WTC11 (cell line): ENCODE measurements at regions of chr17 and their contacts with region 1.

Region 1: DNA sequence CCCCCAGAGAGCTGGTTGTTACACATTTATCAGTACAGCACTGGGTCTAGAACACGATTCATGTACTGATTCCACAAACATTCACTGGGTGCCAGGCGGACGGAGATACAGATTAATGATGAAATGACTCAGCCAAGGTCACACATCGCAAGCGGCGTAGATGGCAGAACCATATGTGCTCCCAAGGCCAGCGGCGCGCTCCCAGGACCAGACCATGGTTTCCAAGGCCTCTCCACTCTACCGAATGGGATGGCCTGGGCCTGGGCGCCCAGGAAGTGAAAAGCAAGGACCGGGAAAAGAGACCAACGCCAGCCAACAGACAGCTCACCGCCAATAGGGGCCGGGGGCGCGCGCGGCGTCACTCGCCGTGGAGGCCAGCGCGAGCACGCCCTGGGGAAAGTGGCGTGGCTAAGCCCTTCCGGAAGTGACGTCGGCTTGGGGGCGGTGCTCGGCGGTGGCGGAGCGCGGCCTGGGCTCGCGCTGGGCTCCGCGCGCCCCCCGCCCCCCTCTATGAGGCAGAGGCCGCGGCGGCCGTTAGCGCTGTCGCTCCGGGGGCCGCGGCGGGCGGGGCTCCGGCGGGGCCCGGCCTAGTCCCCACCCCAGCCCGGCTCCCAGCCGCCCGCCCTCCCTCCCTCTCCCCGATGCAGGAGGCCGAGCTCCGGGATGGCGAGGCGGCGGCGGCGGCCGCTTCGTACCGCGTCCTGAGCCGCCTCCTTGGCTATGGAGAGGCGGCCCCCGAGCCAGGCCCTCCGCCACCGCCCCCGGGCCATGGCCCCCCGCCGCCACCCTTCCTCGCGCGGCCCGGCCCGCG is at the start of gene SOCS7:
- DNase-seq: peak; percentile 90
- ATAC-seq: peak; percentile 81
- H3K4me3 Mint-ChIP-seq: peak within 1 kb of the TSS; percentile 79
- H3K27ac Mint-ChIP-seq: peak within 1 kb of the TSS; percentile 98
- H3K4me1 Mint-ChIP-seq: peaks cover 48% of the 10 kb centered on the region
- H3K27me3 Mint-ChIP-seq: no peaks in the 10 kb centered on the region; the same call in 1 of the 2 replicates
- CTCF ChIP-seq: no peak
- total RNA-seq, gene SOCS7: 32.3 to 34.4 TPM (median 33.6 TPM) in 3 replicates

Region 2: GRCh38 chr17:38322091-38322779 is 29.4 kb before region 1 on chr17:
- CTCF ChIA-PET with region 1: interaction called, 221 read pairs
- POLR2A ChIA-PET with region 1: interaction called, 3 read pairs
- DNase-seq: peak; percentile 83
- ATAC-seq: peak; percentile 78
- H3K4me3 Mint-ChIP-seq: no peak overlapping the region
- H3K27ac Mint-ChIP-seq: no peak overlapping the region; the same call in 1 of the 2 replicates
- H3K4me1 Mint-ChIP-seq: peaks cover 22% of the 10 kb centered on the region
- H3K27me3 Mint-ChIP-seq: no peaks in the 10 kb centered on the region
- CTCF ChIP-seq: peak; percentile 90

Region 3: DNA sequence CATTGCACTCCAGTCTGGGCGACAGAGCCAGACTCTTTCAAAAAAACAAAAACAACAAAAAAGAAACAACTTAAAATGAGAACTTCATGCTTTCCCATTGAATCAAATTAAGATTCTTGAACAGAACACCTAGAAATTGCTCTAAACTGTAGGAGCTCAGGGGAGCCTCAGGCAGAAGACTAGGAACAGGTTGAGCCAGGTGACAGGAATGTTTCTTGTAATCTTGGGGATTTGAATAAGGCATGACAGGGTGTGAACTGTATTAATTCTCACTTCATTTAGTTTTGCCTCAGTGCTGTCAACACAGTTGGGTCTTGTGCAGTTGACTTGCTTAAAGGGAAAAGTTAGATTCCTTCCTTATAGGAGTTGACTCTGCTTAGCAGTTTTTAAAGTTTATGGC is 27.8 kb after region 1 on chr17:
- CTCF ChIA-PET with region 1: interaction called, 48 read pairs
- POLR2A ChIA-PET with region 1: no interaction called
- DNase-seq: no peak
- ATAC-seq: no peak
- H3K4me3 Mint-ChIP-seq: no peak overlapping the region
- H3K27ac Mint-ChIP-seq: no peak overlapping the region
- H3K4me1 Mint-ChIP-seq: no peaks in the 10 kb centered on the region
- H3K27me3 Mint-ChIP-seq: no peaks in the 10 kb centered on the region
- CTCF ChIP-seq: no peak

Region 4: DNA sequence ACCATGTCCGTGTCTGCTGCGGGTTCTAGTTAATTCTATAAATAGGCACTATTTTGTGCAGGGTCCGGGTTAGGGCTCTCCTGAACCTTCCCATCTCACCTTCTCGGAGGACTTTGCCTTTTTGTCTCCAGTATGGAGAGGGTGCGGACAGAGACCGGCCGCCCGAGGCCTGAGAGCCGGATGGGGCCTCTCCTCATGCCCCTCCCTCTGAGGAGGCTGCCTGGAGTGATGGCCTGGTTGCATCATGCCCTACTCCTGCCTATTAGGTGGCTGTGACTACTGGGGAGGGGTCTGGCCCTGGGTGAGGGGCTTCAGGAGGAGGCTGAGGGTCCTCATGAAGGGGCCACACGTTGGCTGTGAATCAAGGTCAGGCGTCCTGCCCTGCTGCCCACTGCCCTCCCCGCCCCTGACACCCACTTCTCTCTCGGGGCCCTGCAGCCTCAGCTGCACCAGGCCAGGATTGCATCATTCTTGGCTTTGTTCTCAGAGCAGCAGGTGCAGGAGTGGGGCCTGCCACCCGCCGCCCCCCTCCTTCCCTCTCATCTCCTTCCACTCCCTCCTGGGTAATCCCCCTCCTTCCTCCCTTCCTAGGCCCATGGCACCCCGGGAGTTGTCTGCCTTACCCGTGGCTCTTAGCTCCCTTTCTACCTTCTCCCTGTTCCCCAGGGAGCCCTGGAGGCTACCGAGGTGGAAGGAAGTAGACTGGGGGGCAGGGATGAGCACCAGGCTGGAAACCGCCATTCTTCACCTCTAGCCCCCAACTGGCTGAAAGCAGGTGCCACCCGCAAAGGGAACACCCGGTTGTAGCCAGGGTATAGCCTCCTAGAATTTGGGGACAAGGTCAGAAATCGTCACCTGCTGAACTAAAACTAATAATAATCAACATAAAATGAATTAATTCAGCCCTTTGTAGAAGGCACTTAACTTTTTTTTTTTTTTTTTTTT is 63.9 kb after region 1 on chr17:
- CTCF ChIA-PET with region 1: interaction called, 222 read pairs
- POLR2A ChIA-PET with region 1: interaction called, 20 read pairs
- DNase-seq: peak; percentile 69
- ATAC-seq: peak; percentile 43
- H3K4me3 Mint-ChIP-seq: peak overlapping the region; percentile 61
- H3K27ac Mint-ChIP-seq: peak overlapping the region; percentile 91
- H3K4me1 Mint-ChIP-seq: peaks cover 59% of the 10 kb centered on the region
- H3K27me3 Mint-ChIP-seq: peaks cover 29% of the 10 kb centered on the region
- CTCF ChIP-seq: no peak

Region 5: DNA sequence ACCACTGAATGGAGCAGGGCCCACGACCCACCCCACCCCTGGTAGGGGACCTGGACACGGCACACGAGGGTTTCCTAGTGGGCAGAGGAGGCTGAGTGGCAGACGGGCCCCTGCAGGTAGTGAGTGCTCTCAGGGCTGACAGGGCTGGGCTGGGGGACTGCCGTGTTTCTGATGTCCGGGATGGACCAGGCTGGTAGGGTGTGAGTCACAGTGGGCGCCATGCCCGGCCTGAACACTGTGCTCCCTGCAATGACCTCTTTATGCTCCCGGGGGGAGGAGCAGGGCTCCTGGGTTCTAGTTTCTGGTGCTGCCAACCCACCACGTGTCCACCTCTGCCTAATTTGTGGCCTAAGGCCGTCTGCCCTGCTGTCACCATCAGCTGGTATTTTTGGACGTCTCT is 102.9 kb after region 1 on chr17:
- CTCF ChIA-PET with region 1: interaction called, 10 read pairs
- POLR2A ChIA-PET with region 1: interaction called, 4 read pairs
- DNase-seq: no peak
- ATAC-seq: no peak
- H3K4me3 Mint-ChIP-seq: peak overlapping the region; percentile 62
- H3K27ac Mint-ChIP-seq: peak overlapping the region; percentile 84
- H3K4me1 Mint-ChIP-seq: peaks cover 65% of the 10 kb centered on the region
- H3K27me3 Mint-ChIP-seq: 0 out of 2 replicates have a peak, but pooled peaks cover 2% of the 10 kb centered on the region
- CTCF ChIP-seq: no peak